GM18951 (cell line): ENCODE measurements at regions of chr14 and their contacts with region 1.

Region 1: GRCh38 chr14:76918751-76919543 is 92.7 kb downstream of the LRRC74A start:
- POLR2A ChIP-seq: no peak

Region 2: GRCh38 chr14:76720382-76720813 is 198.5 kb before region 1 on chr14:
- in situ Hi-C with region 1: no loop called
- POLR2A ChIP-seq: no peak

Region 3: GRCh38 chr14:77040059-77040740 is 121.3 kb after region 1 on chr14:
- in situ Hi-C with region 1: loop called (anchors 10 kb)
- POLR2A ChIP-seq: peak; percentile 59